Left cardiac atrium (tissue), 4 donors: ENCODE measurements at regions of chr1 and their contacts with region 1.

Region 1: DNA sequence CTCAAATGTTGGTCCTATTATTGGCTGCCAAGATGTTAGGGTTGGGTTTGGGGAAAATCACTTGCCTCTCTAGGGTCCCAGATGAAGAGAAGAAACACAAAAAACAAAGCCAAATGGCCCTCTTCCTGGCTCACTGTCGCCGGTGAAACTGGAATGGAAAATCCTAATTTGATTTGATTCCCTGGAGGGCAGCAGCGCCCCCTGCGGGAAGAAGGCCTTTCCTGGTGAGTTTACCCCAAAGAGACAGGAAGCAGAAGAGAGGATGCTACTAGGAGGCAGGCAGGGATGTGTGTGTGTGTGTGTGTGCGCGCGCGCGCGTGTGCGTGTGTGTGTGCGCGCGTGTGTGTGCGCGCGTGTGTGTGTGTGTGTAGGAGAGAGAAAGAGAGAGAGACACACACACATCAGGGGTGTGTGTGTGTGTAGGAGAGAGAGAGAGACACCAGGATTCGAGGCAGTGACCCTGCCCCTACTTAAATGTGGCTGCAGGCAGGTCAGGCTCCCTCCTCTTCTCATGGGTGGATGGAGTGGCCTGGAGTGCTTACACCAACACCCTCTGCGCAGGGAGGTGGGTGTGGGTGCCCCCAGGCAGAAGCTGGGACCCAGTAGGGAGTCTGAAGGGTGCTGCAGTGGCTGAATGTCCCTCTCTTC is 3.1 kb upstream of the SELENON start:
- DNase-seq: peak; percentile 86
- ATAC-seq: peak; percentile 16 to 27

Region 2: DNA sequence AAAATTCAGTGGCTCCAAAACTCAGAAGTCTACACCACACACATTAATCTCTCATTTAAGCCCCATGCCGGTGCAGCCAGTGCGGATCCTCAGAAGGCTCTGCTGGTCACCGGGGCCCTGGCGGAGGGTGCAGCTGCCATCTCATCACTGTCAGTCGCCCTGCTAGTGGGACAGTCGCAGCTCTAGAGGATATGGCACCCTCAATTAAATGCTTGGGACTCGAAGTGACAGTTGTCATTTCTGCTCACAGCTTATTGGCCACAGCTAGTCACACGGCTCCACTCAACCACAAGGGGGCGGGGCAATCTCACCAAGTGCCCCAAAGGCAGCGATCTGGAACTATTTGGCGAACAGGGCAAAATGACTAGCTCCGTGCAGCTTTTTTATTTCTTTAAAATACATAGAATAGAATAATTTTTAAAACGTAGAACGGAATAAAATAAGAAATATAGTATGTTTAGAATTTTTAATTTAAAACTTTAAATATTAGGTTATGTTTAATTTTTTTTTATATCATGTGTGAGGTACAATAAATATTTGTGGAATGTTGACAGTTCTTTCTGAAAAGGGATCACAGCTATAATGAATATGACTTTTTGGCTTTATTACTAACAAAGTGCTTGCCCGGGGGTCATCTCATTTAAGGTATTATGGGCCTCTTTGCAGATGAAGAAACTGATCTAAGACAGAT is 188.3 kb before region 1 on chr1:
- intact Hi-C with region 1: loop called (anchors 2 to 5 kb)
- DNase-seq: peak; percentile 90
- ATAC-seq: peak; percentile 90 to 95

Region 3: GRCh38 chr1:25631750-25632485 is 165.0 kb before region 1 on chr1:
- intact Hi-C with region 1: no loop called
- DNase-seq: no peak
- ATAC-seq: peak; percentile 53 to 68

Region 4: GRCh38 chr1:25688390-25689161 is 108.4 kb before region 1 on chr1:
- intact Hi-C with region 1: loop called in 1 of 2 experiments (anchors 10 kb)
- DNase-seq: no peak
- ATAC-seq: peak; percentile 32 to 41

Region 5: GRCh38 chr1:26083246-26083645 is 286.3 kb after region 1 on chr1:
- intact Hi-C with region 1: no loop called
- DNase-seq: peak; percentile 36
- ATAC-seq: peak; percentile 61 to 83